ENCODE measurements at regions of chr2 and their contacts with region 1.

Region 1: GRCh38 chr2:217988014-217988839 is 14.6 kb downstream of the TNS1 start:
- H3K4me3 ChIP-seq: no peak overlapping the region
- H3K27ac ChIP-seq: no peak overlapping the region
- H3K4me1 ChIP-seq: peaks cover 2% of the 10 kb centered on the region; the same call in 1 of the 2 replicates
- CTCF ChIP-seq: peak; percentile 75

Region 2: DNA sequence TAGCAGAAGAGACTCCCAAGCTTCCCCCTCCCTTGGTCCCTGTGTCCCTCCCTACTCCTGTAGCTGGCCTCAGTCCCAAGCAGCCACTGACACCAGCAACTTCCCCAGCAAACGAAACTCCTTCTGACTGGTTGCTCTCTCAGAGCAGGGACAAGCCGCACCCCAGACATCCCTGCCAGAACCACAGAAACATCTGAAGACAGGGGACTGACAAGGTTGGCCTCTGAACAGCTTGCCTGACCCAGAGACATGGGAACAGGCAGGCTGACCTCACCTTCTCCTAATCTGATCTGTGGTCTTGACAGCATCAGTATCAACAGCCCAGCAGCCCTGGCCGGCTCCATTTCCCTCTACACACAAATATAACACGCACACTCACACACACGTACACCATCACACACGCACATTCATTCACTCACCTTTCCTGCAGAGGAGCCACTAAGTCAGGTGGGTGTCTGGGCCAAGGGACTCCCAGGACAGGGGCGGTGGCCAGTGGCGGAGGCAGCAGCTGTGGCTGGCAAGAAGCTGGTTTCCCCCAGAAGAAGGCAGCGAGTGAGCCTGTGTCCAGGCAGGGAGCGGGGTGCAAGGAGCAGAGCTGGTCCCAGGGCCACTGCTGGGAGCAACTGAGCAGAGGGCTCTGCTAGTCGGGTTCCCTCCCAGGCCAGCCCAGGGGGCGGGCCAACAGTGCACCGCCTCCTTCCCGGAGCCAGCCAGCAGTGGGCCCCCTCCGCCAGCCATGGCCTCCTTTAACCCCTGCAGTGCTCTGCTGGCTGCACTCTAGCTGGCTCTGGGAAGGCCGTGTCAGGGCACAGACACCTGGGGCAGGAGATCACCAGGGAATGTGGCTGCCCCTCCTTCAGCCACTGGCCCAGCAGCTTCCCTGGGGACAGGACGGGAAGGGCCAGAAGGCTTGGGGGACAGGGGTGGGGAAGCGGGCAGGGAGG is 44.5 kb before region 1 on chr2:
- CTCF ChIA-PET with region 1: interaction called, 11 read pairs
- POLR2A ChIA-PET with region 1: no interaction called
- H3K4me3 ChIP-seq: no peak overlapping the region
- H3K27ac ChIP-seq: no peak overlapping the region
- H3K4me1 ChIP-seq: peaks cover 4% of the 10 kb centered on the region
- CTCF ChIP-seq: peak; percentile 50; the same call in 1 of the 2 replicates

Measured in HEK293 (cell line).